Activated CD4-positive, alpha-beta T cell treated with anti-CD3 and anti-CD28 coated beads, Interleukin-2, amount 10 ng/mL, durations not matched to agents 24 days and 14 days (primary cell): ENCODE measurements at regions of chr6 and their contacts with region 1.

Region 1: GRCh38 chr6:22068561-22069305 is 228.1 kb downstream of the PRL start:
- DNase-seq: no peak
- H3K4me3 Mint-ChIP-seq: no peak overlapping the region
- H3K27ac Mint-ChIP-seq: peak overlapping the region; percentile 44
- H3K4me1 Mint-ChIP-seq: peaks cover 10% of the 10 kb centered on the region
- H3K27me3 Mint-ChIP-seq: peaks cover 2% of the 10 kb centered on the region

Region 2: GRCh38 chr6:22102671-22103070 is 33.9 kb after region 1 on chr6:
- intact Hi-C with region 1: loop called (anchors 2 kb)
- DNase-seq: no peak
- H3K4me3 Mint-ChIP-seq: no peak overlapping the region
- H3K27ac Mint-ChIP-seq: no peak overlapping the region
- H3K4me1 Mint-ChIP-seq: peaks cover 3% of the 10 kb centered on the region
- H3K27me3 Mint-ChIP-seq: no peaks in the 10 kb centered on the region